Psoas muscle (tissue), 8 donors: ENCODE measurements at regions of chr3 and their contacts with region 1.

Region 1: GRCh38 chr3:186259612-186260383 is 102.2 kb downstream of the DGKG start:
- DNase-seq: peak; percentile 55 to 79
- ATAC-seq: peak; percentile 95 to 100 (median 96)
- H3K4me3 ChIP-seq: no peak overlapping the region
- H3K27ac ChIP-seq: no peak overlapping the region
- H3K4me1 ChIP-seq: no peaks in the 10 kb centered on the region
- H3K27me3 ChIP-seq: peaks cover 0 to 1% (median 0%) of the 10 kb centered on the region in 3 donors
- CTCF ChIP-seq: peak; percentile 77

Region 2: DNA sequence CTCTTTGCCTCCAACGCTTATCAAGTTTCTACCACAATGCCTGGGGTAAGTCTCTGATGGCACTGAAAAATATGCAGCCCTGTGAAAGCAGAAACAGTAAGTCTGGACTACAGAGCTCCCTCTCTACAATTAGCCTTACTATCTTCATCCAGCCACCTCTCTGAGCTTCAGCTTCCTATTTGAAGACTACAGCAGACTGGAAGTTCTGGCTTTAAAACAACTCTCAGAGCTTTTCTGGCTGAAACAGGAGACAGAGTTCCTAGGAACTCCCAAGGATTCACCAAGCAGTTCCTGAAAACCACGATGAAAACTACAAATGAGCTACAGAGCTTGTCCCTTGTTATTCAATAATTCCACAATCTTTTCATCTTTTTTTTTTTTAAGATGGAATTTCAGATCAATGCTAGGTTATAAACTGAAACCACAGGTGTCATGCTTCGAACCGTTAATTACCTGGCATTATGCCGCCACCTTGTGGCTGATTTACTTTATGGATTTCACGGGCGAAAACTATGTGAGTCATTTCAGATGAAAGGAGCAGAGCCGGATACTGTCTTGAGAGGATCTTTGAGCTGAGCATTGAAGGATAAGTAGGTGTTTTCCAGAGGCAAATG is 280.5 kb after region 1 on chr3:
- intact Hi-C with region 1: loop called (anchors 1 to 2 kb)
- DNase-seq: peak in 1 of 2 donors; percentile 24
- ATAC-seq: peak; percentile 68 to 97 (median 84)
- H3K4me3 ChIP-seq: peak overlapping the region; percentile 33
- H3K27ac ChIP-seq: no peak overlapping the region
- H3K4me1 ChIP-seq: no peaks in the 10 kb centered on the region
- H3K27me3 ChIP-seq: no peaks in the 10 kb centered on the region
- CTCF ChIP-seq: peak; percentile 71

Region 3: DNA sequence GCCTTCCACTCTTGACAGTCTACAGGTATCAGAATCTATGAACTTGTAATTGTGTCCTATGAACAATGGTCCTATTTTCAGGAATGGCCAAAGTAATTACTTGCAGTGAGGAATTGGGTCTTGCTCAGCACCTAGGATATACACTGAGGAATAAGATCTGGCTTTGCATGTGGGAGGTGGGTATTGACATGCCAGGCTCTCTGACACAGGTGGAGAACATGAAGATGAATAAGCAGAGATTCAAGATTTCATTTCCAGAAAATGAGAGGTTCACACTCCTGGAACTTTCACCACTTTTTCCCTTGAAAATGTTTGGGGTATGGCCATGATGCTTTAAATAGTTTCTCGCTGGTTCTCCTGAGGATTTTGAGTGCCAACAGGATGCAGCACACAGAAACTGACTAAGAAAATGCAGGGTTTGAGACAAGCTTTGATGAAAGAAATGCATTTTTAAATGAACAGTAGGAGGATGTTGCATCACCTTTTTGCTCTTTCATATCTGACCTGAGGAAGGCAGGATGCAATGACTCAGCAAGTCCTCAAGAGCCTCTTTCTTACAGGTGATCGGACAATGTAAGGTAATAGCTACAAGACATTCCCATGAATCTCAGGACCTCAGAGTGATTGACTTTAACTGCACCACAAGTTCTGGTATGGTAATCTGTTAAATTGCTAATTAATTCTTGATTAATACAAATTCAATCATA is 409.7 kb after region 1 on chr3:
- intact Hi-C with region 1: no loop called
- DNase-seq: no peak
- ATAC-seq: no peak
- H3K4me3 ChIP-seq: no peak overlapping the region
- H3K27ac ChIP-seq: no peak overlapping the region
- H3K4me1 ChIP-seq: no peaks in the 10 kb centered on the region
- H3K27me3 ChIP-seq: peaks cover 0 to 4% (median 2%) of the 10 kb centered on the region in 3 donors
- CTCF ChIP-seq: no peak